CD4-positive, alpha-beta T cell (primary cell): ENCODE measurements at regions of chr10 and their contacts with region 1.

Region 1: DNA sequence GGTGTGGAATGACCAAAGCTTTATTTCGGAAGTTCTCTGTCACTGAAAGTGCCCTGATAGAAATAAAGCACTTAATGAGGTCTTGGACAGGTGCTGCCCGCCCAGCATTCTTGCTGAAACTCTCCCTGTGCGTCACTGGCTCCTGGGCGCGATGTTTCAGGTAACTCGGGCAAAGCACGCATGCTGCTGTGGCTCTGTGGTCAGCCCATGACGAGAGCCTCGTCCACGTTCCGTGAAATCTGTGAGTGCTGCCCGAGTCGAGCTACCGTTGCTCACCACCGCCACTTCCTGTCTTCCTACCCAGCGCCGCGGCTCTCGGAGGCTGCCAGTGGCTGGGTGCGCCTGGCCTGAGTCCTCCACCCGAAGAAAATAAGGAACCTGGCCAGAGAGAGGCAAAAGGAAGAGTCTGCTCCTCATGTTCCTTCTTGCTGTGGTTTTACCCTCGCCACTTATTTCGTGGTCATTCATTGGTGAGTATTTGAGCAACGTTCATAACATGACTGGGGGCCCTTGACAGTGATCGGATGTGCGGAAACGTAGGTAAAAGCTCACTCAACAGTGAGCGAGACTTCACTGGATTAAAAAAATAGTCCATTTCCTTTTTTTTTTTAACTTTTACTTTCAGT is 95.5 kb downstream of the MAP3K8 start:
- DNase-seq: peak; percentile 53 to 93 (median 68)
- ATAC-seq: peak; percentile 80
- H3K4me3 ChIP-seq: peak overlapping the region; percentile 62
- H3K4me3 Mint-ChIP-seq: peak overlapping the region; percentile 86
- H3K27ac ChIP-seq: peak overlapping the region; percentile 89 to 91
- H3K27ac Mint-ChIP-seq: peak overlapping the region; percentile 97
- H3K4me1 ChIP-seq: peaks cover 63% of the 10 kb centered on the region
- H3K4me1 Mint-ChIP-seq: peaks cover 64% of the 10 kb centered on the region
- H3K27me3 ChIP-seq: no peaks in the 10 kb centered on the region
- H3K27me3 Mint-ChIP-seq: no peaks in the 10 kb centered on the region
- CTCF ChIP-seq: no peak

Region 2: DNA sequence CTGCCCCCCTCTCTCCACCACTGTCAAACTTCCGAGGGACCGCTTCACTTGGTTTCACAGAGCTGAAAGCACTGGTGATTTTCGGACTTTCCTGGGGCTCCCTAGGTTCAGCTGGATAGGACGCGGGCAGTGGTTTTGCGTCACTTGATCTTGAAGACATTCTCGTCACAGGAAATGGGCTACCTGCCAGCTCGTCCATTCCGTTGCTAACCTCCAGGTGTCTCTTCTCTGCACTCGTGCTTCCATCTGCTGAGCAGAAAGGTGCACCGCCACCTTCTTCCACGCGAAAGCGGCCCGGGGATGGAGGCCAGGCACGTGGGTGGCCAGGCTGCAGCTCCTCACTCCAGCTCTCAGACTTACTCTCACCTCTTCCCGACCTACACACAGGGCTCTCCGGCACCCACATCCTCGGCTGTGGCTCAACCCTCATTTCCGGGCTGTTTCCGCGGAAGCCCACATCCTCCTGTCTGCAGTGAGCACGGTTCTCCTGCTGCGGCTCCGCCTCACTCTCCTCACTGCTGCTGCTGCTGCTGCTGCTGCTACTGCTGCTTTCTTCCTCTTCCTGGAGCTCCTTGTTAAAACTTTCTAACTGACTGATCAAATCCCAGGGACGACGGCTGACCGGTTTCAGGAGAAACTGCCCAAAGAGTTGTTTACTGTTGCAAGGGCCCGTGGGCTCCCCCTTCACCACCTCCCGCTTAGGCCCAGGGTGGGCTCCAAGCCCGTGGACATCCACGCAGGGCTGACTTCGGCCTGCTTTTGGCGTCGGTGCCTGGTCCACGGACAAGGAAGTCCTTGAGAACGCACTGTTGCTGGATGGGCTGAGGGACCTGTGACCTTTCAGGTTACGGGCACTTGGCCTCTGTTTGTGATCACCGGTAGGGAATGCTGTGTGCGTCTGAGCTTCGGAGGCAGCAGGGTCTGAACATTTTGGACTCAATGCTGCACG is 502.2 kb before region 1 on chr10:
- CTCF ChIA-PET with region 1: no interaction called
- POLR2A ChIA-PET with region 1: interaction called, 8 read pairs
- intact Hi-C with region 1: loop called in 1 of 2 experiments (anchors 5 kb)
- DNase-seq: peak; percentile 72 to 96 (median 83)
- ATAC-seq: peak; percentile 93
- H3K4me3 ChIP-seq: peak overlapping the region; percentile 35
- H3K4me3 Mint-ChIP-seq: peak overlapping the region; percentile 74
- H3K27ac ChIP-seq: no peak overlapping the region
- H3K27ac Mint-ChIP-seq: peak overlapping the region; percentile 79
- H3K4me1 ChIP-seq: peaks cover 40% of the 10 kb centered on the region
- H3K4me1 Mint-ChIP-seq: peaks cover 36% of the 10 kb centered on the region
- H3K27me3 ChIP-seq: peaks cover 32 to 35% of the 10 kb centered on the region in 2 experiments
- H3K27me3 Mint-ChIP-seq: peaks cover 85% of the 10 kb centered on the region
- CTCF ChIP-seq: peak; percentile 25

Region 3: DNA sequence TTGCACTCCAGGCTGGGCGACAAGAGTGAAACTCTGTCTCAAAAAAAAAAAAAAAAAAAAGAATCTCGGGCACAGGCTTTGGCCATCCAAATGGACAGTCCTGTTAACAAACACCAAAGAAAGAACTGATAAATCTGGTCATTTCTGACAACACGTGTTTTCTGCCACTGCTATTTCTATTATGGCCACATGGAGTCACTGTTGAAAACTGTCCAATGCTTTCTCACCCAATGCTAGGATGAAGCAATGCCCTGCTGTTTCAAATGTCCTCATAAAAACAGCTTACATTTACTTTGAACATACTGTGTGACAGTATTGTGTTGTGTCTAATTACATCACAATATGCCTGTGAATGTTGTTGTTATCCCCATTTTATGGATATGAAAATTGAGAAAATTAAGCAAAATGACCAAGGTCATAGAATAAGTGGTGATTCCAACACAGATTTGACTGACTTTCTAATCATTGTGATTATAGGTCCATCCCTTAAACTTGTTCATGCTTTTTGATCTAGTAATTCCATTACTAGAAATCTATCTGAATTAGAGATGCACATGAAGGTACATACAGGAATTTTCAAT is 115.4 kb before region 1 on chr10:
- CTCF ChIA-PET with region 1: interaction called, 14 read pairs
- POLR2A ChIA-PET with region 1: interaction called, 34 read pairs
- intact Hi-C with region 1: loop called (anchors 1 kb)
- DNase-seq: peak in 4 of 14 experiments; percentile 40 to 78 (median 72)
- ATAC-seq: peak; percentile 64
- H3K4me3 ChIP-seq: no peak overlapping the region
- H3K4me3 Mint-ChIP-seq: no peak overlapping the region
- H3K27ac ChIP-seq: no peak overlapping the region
- H3K27ac Mint-ChIP-seq: no peak overlapping the region
- H3K4me1 ChIP-seq: peaks cover 11% of the 10 kb centered on the region
- H3K4me1 Mint-ChIP-seq: peaks cover 13% of the 10 kb centered on the region
- H3K27me3 ChIP-seq: no peaks in the 10 kb centered on the region
- H3K27me3 Mint-ChIP-seq: no peaks in the 10 kb centered on the region
- CTCF ChIP-seq: peak; percentile 81

Region 4: DNA sequence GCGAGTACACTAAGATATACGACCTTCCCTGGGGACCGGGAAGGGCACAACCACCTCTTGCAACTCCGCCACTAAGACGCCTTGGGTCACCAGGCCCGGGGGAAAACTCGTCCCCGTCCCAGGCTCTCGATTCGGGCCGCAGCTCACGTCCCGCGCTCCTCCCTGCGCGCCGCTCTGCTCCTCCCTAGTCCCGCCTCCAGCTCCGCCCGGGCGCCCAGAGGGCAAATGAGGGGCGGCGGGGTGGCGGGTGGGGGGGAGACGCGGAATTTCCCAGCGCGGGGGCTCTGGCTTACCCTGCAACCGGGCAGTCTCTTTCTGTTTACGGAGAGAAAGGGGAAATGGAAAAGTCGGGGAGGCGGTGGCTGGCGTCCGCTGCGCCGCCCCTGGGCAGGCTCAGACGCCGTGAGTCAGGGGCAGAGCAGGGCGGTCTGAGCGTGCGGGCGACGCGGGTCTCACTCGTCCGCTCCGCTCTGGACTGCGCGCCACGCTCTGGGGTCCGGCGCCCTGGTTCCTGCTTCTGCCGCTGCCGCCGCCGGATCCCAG is 95.7 kb before region 1 on chr10 and contains the start of gene MAP3K8:
- CTCF ChIA-PET with region 1: interaction called, 3 read pairs
- POLR2A ChIA-PET with region 1: interaction called, 32 read pairs
- intact Hi-C with region 1: loop called (anchors 5 kb)
- DNase-seq: peak; percentile 43 to 95 (median 69)
- ATAC-seq: peak; percentile 71
- H3K4me3 ChIP-seq: peak within 1 kb of the TSS; percentile 93
- H3K4me3 Mint-ChIP-seq: peak within 1 kb of the TSS; percentile 94
- H3K27ac ChIP-seq: peak within 1 kb of the TSS; percentile 74
- H3K27ac Mint-ChIP-seq: peak within 1 kb of the TSS; percentile 69
- H3K4me1 ChIP-seq: peaks cover 45% of the 10 kb centered on the region
- H3K4me1 Mint-ChIP-seq: peaks cover 44% of the 10 kb centered on the region
- H3K27me3 ChIP-seq: no peaks in the 10 kb centered on the region
- H3K27me3 Mint-ChIP-seq: peaks cover 4% of the 10 kb centered on the region
- CTCF ChIP-seq: no peak
- total RNA-seq, gene MAP3K8: 27.3 to 28.9 TPM

Region 5: GRCh38 chr10:30493609-30494530 is 35.6 kb before region 1 on chr10:
- CTCF ChIA-PET with region 1: interaction called, 4 read pairs
- POLR2A ChIA-PET with region 1: interaction called, 10 read pairs
- intact Hi-C with region 1: loop called in 1 of 2 experiments (anchors 5 kb)
- DNase-seq: peak in 4 of 14 experiments; percentile 5 to 83 (median 52)
- ATAC-seq: peak; percentile 41
- H3K4me3 ChIP-seq: no peak overlapping the region
- H3K4me3 Mint-ChIP-seq: no peak overlapping the region
- H3K27ac ChIP-seq: no peak overlapping the region
- H3K27ac Mint-ChIP-seq: no peak overlapping the region
- H3K4me1 ChIP-seq: peaks cover 48% of the 10 kb centered on the region
- H3K4me1 Mint-ChIP-seq: peaks cover 56% of the 10 kb centered on the region
- H3K27me3 ChIP-seq: no peaks in the 10 kb centered on the region
- H3K27me3 Mint-ChIP-seq: no peaks in the 10 kb centered on the region
- CTCF ChIP-seq: no peak